ENCODE measurements at regions of chr1 and their contacts with region 1.

Region 1: DNA sequence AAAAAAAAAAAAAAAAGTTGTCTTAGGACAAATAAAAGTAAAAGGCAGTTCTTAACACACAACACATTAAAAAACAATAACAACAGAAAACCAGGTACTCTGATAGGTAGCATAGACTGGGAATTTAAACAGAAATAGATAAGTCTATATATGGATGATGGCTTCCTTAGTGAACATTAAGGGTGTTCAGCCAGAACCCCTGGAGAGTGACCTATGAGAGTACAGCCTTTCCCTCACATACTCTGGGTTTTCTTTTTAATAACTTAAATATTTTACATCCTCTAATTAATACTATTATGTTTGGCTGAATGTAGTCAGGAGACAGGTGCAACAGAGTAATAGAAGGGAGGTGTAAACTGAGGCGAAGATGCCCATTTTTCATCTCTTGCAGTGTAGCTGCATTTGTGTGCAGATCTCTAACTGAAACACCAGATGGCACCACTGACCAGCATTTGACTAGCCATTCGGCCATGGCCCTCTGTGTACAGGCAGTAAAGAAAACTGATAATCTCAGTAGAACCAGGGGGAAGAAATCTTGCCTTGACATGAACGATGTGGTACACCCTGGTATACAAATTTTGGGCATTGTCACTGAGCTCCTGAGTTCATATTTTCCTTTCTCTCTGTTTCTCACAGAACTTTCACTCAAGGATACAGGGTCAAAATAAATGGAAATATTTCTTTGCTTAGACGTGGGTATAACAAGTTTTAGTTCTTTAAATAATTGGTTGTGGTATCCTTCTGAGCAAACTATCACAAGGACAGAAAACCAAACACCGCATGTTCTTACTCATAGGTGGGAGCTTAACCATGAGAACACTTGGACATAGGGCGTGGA is 7.6 kb downstream of the TTF2 start:
- DNase-seq: peak; percentile 66

Region 2: DNA sequence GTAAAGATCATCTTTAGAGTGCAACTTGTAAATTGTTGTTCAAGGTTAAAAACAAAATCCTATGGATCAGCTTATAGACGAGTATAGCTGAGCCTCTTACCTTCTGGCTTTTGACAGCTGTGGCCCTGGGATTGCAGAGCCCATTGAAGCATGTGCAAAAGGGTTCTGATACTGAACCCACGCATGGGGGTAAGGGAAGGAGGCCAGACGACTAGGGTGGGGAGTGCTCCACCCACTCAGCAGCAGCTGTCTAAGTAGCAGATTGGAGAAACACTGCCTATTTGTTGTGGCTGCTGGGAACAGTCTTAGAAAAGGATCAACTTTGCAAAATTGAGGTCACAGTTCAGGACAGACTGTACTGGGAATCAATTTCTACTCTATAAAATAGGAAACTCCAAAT is 50.1 kb before region 1 on chr1:
- CTCF ChIA-PET with region 1: no interaction called
- POLR2A ChIA-PET with region 1: no interaction called
- DNase-seq: no peak

Region 3: GRCh38 chr1:117128323-117129079 is 60.7 kb after region 1 on chr1:
- CTCF ChIA-PET with region 1: interaction called, 13 read pairs
- POLR2A ChIA-PET with region 1: no interaction called
- DNase-seq: peak; percentile 41

Region 4: GRCh38 chr1:117156505-117156904 is 88.8 kb after region 1 on chr1:
- CTCF ChIA-PET with region 1: no interaction called
- POLR2A ChIA-PET with region 1: no interaction called
- DNase-seq: no peak